Dorsolateral prefrontal cortex (tissue), 120 donors: ENCODE measurements at regions of chr3 and their contacts with region 1.

Region 1: GRCh38 chr3:17742108-17742879 is at the start of gene TBC1D5:
- DNase-seq: peak; percentile 58 to 97 (median 94)
- H3K4me3 ChIP-seq: peak within 1 kb of the TSS; percentile 66 to 97 (median 86)
- H3K27ac ChIP-seq: peak within 1 kb of the TSS; percentile 88 to 100 (median 98)
- H3K27me3 ChIP-seq: no peaks in the 10 kb centered on the region
- CTCF ChIP-seq: peak in 20 of 56 donors; percentile 2 to 35 (median 18)
- total RNA-seq, gene TBC1D5: 66.1 to 103 (median 87.1) TPM

Region 2: DNA sequence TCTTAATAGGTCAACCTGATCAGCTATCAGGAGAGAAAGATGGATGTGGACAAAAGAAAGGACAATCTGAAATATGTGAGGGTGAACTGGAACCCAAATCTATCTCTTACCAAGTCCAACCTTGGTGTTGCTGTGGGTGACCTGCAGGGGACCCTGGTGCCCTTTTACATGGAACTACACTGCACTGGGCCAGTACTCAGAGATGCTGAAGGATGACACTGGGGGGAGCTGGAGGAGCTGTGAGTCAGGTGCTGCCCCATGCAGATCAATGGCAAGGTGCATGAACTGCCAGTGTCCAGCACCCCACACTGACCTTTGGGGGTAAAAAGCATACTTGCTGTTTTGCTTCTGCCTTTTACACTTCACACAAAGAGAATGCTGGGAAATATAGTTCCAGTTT is 55.7 kb after region 1 on chr3:
- intact Hi-C with region 1: loop called in 1 of 2 experiments (anchors 5 kb)
- DNase-seq: no peak
- H3K4me3 ChIP-seq: no peak overlapping the region
- H3K27ac ChIP-seq: no peak overlapping the region
- H3K27me3 ChIP-seq: no peaks in the 10 kb centered on the region
- CTCF ChIP-seq: no peak

Region 3: GRCh38 chr3:17831366-17831765 is 89.1 kb after region 1 on chr3:
- intact Hi-C with region 1: loop called in 1 of 2 experiments (anchors 10 kb)
- DNase-seq: no peak
- H3K4me3 ChIP-seq: no peak overlapping the region
- H3K27ac ChIP-seq: no peak overlapping the region
- H3K27me3 ChIP-seq: no peaks in the 10 kb centered on the region
- CTCF ChIP-seq: no peak

Region 4: GRCh38 chr3:18419232-18419631 is 676.9 kb after region 1 on chr3:
- intact Hi-C with region 1: loop called in 1 of 2 experiments (anchors 5 kb)
- DNase-seq: no peak
- H3K4me3 ChIP-seq: peak overlapping the region in 54 of 59 donors; percentile 2 to 95 (median 32)
- H3K27ac ChIP-seq: peak overlapping the region in 40 of 59 donors; percentile 1 to 73 (median 33)
- H3K27me3 ChIP-seq: no peaks in the 10 kb centered on the region
- CTCF ChIP-seq: no peak